ENCODE measurements at regions of chr4 and their contacts with region 1.

Region 1: DNA sequence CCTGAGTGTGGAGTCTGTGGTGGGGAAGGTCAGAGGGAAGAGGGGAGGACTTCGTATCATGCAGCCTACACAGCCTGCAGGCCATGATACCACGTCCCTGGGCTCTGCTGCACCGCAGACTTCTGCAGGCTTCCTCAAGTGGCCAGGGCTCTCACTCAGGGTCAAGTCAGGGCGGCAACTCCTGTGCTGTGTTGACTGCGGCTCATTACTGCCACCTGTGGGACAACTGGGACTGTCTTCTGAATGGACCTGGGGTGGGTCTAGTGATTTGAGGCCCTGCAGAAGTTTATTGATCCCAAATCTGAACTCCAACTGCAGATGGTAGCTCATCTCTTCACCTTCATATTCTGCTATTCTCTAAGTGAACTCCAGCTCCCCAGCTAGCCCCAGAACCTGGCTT is 167.1 kb downstream of the NSUN7 start:
- DNase-seq: peak; percentile 53 to 65
- ATAC-seq: peak; percentile 75 to 86 (median 81)
- H3K4me3 ChIP-seq: peak overlapping the region; percentile 19
- H3K27ac ChIP-seq: peak overlapping the region; percentile 81
- H3K4me1 ChIP-seq: peaks cover 37% of the 10 kb centered on the region
- H3K27me3 ChIP-seq: no peaks in the 10 kb centered on the region
- CTCF ChIP-seq: peak; percentile 45

Region 2: GRCh38 chr4:40731792-40732245 is 185.1 kb before region 1 on chr4:
- intact Hi-C with region 1: loop called in 1 of 2 experiments (anchors 5 kb)
- DNase-seq: no peak
- ATAC-seq: no peak
- H3K4me3 ChIP-seq: no peak overlapping the region
- H3K27ac ChIP-seq: no peak overlapping the region
- H3K4me1 ChIP-seq: no peaks in the 10 kb centered on the region
- H3K27me3 ChIP-seq: no peaks in the 10 kb centered on the region
- CTCF ChIP-seq: no peak

Region 3: DNA sequence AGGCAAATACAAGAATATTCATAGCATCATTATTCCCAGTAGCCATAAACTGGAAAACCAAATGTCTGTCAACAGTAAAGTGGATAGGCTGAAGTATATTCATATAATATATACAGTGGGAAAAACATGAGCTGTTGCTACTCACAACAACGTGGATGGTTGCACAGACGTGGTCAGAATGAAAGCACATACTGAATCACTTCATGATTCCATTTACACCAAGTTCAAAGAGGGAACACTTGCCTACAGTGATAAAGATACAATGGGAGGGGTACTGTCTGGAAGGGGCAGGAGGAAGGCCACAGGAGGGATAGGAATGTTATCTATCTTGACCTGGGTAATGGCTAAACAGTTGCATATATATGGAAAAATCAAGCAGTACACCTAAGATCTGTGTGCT is 272.2 kb after region 1 on chr4:
- intact Hi-C with region 1: no loop called
- DNase-seq: no peak
- ATAC-seq: no peak
- H3K4me3 ChIP-seq: no peak overlapping the region
- H3K27ac ChIP-seq: no peak overlapping the region
- H3K4me1 ChIP-seq: peaks cover 18% of the 10 kb centered on the region
- H3K27me3 ChIP-seq: no peaks in the 10 kb centered on the region
- CTCF ChIP-seq: no peak

Region 4: DNA sequence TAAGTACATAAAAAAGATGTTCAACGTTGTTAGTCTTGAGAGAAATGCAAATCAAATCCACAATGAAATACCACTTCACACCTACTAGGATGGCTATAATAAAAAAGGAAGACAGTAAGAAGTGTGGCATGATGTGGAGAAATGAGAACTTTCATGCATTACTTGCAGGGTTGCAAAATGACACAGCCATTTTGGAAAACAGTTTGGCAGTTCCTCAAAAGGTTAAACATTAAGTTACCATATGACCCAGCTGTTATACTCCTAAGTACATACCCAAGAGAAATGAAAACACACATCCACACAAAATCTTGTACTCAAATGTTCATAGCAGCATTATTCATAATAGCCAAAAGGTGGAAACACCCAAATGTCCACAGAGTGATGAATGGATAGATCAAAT is 595.3 kb after region 1 on chr4:
- intact Hi-C with region 1: no loop called
- DNase-seq: no peak
- ATAC-seq: no peak
- H3K4me3 ChIP-seq: no peak overlapping the region
- H3K27ac ChIP-seq: no peak overlapping the region
- H3K4me1 ChIP-seq: no peaks in the 10 kb centered on the region
- H3K27me3 ChIP-seq: no peaks in the 10 kb centered on the region
- CTCF ChIP-seq: no peak

Measured in psoas muscle (tissue), 8 donors.